ENCODE measurements at regions of chr9 and their contacts with region 1.

Region 1: DNA sequence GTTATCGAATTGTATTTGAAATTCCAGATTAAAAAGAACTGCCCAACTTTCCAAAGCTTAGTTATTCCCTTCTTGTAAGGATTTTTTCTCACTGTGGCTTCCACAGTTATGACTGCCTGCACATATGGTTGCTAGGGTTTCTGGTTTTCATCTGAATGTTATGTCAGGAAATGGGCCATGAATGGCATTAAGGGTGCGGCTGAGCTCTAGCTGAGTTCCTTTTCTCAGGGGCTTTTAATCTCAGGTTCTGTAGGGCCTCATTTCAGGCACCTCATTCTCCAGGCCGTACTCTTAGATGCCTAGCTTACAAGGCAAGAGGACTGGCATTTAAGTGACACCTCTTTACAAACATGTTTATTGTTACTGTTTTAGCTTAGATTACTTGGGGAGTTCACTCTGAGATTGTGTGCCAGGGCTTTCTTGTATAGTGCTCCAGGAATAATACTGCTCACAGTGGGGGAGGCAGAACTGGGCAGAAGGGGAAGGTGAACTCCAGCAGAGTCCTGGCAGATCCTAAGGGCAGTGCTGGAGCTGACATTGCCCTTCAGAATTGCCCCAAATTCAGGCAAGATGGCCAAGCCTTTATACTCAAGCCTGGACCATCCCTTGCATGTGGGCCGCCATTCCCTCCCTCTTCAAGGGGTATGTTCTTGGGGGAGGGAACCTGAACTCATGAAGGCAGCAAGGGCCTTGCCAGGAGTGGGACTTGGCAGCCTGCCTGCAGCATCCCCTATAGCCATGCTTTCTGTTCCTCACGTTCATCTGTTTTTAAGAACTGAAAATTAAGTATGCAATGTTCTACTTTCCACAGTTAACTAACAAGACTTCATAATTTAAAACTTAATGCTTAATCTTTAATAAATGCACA is 111.5 kb downstream of the KDM4C start:
- DNase-seq: no peak
- ATAC-seq: no peak
- H3K4me3 ChIP-seq: no peak overlapping the region
- H3K27ac ChIP-seq: no peak overlapping the region
- H3K4me1 ChIP-seq: peaks cover 6% of the 10 kb centered on the region
- H3K27me3 ChIP-seq: no peaks in the 10 kb centered on the region
- CTCF ChIP-seq: no peak
- POLR2A ChIP-seq: no peak
- RAD21 ChIP-seq: no peak

Region 2: GRCh38 chr9:6899274-6899673 is 30.0 kb after region 1 on chr9:
- CTCF ChIA-PET with region 1: no interaction called
- POLR2A ChIA-PET with region 1: no interaction called
- dilution Hi-C with region 1: no loop called
- in situ Hi-C with region 1: no loop called
- intact Hi-C with region 1: loop called (anchors 1 kb)
- DNase-seq: peak; percentile 16
- ATAC-seq: no peak
- H3K4me3 ChIP-seq: no peak overlapping the region
- H3K27ac ChIP-seq: no peak overlapping the region
- H3K4me1 ChIP-seq: peaks cover 1% of the 10 kb centered on the region; the same call in 1 of the 2 replicates
- H3K27me3 ChIP-seq: no peaks in the 10 kb centered on the region
- CTCF ChIP-seq: no peak
- POLR2A ChIP-seq: no peak
- RAD21 ChIP-seq: no peak

Measured in IMR-90 (cell line).